Esophagus muscularis mucosa (tissue), 4 donors: ENCODE measurements at regions of chr4 and their contacts with region 1.

Region 1: GRCh38 chr4:185534866-185535611 is at the start of gene PDLIM3:
- DNase-seq: no peak
- H3K4me3 ChIP-seq: peak within 1 kb of the TSS; percentile 84 to 98 (median 92)
- H3K27ac ChIP-seq: peak within 1 kb of the TSS; percentile 97 to 100 (median 99)
- H3K4me1 ChIP-seq: peaks cover 11 to 50% (median 47%) of the 10 kb centered on the region in 4 donors
- H3K27me3 ChIP-seq: peaks cover 0 to 7% (median 0%) of the 10 kb centered on the region in 4 donors
- CTCF ChIP-seq: no peak
- EP300 ChIP-seq: no peak
- POLR2A ChIP-seq: peak; percentile 90
- total RNA-seq, gene PDLIM3: 1,279 to 2,098 (median 1,627) TPM

Region 2: DNA sequence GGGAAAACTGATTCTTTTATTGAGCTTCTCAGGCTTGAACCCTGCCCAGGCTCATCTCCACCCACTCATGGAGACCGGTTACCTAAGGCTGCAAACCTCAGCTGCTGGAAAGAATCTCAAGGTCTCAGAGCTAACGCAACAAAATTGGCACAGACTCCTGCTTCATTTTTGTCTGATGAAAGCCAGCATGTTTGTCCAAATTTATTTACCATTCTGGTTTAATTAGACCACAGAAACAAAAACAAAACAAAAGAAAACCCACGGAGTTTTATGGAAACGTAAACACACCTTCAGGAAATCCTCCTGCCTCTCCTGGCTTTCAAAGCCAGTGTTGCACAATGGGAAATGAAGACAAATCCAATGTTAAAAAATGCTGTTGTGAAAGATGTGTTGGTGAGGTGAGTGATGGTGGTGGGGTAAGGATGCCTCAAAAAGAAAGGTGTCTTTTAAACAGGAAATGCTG is 56.7 kb after region 1 on chr4:
- intact Hi-C with region 1: loop called (anchors 2 kb)
- DNase-seq: no peak
- H3K4me3 ChIP-seq: peak overlapping the region in 3 of 4 donors; percentile 6 to 33 (median 13)
- H3K27ac ChIP-seq: peak overlapping the region; percentile 68 to 85 (median 82)
- H3K4me1 ChIP-seq: peaks cover 16 to 43% (median 39%) of the 10 kb centered on the region in 4 donors
- H3K27me3 ChIP-seq: no peaks in the 10 kb centered on the region
- CTCF ChIP-seq: peak; percentile 8 to 28 (median 12)
- EP300 ChIP-seq: no peak
- POLR2A ChIP-seq: no peak